Common myeloid progenitor, CD34-positive (primary cell): ENCODE measurements at regions of chr2 and their contacts with region 1.

Region 1: GRCh38 chr2:23824777-23825212 is 102.1 kb downstream of the ATAD2B start:
- DNase-seq: peak; percentile 61 to 81 (median 75)
- H3K4me3 ChIP-seq: no peak overlapping the region
- H3K27ac ChIP-seq: no peak overlapping the region
- H3K4me1 ChIP-seq: peaks cover 0 to 5% (median 0%) of the 10 kb centered on the region in 4 experiments
- H3K27me3 ChIP-seq: no peaks in the 10 kb centered on the region

Region 2: GRCh38 chr2:23669413-23670244 is 155.2 kb before region 1 on chr2:
- CTCF ChIA-PET with region 1: no interaction called
- POLR2A ChIA-PET with region 1: no interaction called
- DNase-seq: no peak
- H3K4me3 ChIP-seq: no peak overlapping the region
- H3K27ac ChIP-seq: no peak overlapping the region
- H3K4me1 ChIP-seq: no peaks in the 10 kb centered on the region
- H3K27me3 ChIP-seq: peaks cover 0 to 13% (median 7%) of the 10 kb centered on the region in 5 experiments

Region 3: GRCh38 chr2:23813438-23813837 is 11.4 kb before region 1 on chr2:
- CTCF ChIA-PET with region 1: no interaction called
- POLR2A ChIA-PET with region 1: no interaction called
- DNase-seq: no peak
- H3K4me3 ChIP-seq: no peak overlapping the region
- H3K27ac ChIP-seq: no peak overlapping the region
- H3K4me1 ChIP-seq: no peaks in the 10 kb centered on the region
- H3K27me3 ChIP-seq: no peaks in the 10 kb centered on the region

Region 4: DNA sequence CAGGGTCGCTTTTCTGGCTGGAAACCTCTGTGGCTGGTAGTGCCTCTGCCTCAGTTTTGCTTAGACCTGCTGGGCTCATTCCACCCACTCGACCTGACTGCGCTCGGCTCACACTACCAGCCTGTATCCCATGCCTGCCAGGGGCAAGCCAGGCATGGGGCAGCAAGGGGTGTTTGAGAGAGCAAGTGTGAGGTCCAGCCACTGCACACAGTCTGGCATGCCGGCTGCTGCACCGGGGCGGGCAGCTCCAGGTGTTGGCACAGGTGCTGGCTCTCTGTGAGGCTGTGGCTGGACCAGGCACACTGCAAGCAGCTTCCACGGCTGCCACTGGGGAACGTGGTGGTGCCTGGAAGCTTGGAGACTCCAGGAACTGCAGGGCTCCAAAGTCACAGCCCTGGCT is 11.2 kb after region 1 on chr2:
- CTCF ChIA-PET with region 1: interaction called, 11 read pairs
- POLR2A ChIA-PET with region 1: no interaction called
- DNase-seq: no peak
- H3K4me3 ChIP-seq: no peak overlapping the region
- H3K27ac ChIP-seq: no peak overlapping the region
- H3K4me1 ChIP-seq: no peaks in the 10 kb centered on the region
- H3K27me3 ChIP-seq: no peaks in the 10 kb centered on the region